Sigmoid colon (tissue), 7 donors: ENCODE measurements at regions of chr15 and their contacts with region 1.

Region 1: GRCh38 chr15:74799856-74800547 is 12.6 kb upstream of the LMAN1L start:
- DNase-seq: peak; percentile 80
- H3K4me3 ChIP-seq: no peak overlapping the region
- H3K27ac ChIP-seq: no peak overlapping the region
- H3K4me1 ChIP-seq: peaks cover 0 to 9% (median 5%) of the 10 kb centered on the region in 4 donors
- H3K27me3 ChIP-seq: no peaks in the 10 kb centered on the region
- CTCF ChIP-seq: peak; percentile 87 to 99 (median 93)
- EP300 ChIP-seq: no peak
- POLR2A ChIP-seq: no peak

Region 2: GRCh38 chr15:74680456-74680855 is 119.5 kb before region 1 on chr15:
- intact Hi-C with region 1: no loop called
- DNase-seq: no peak
- H3K4me3 ChIP-seq: no peak overlapping the region
- H3K27ac ChIP-seq: no peak overlapping the region
- H3K4me1 ChIP-seq: no peaks in the 10 kb centered on the region
- H3K27me3 ChIP-seq: no peaks in the 10 kb centered on the region
- CTCF ChIP-seq: no peak
- EP300 ChIP-seq: no peak
- POLR2A ChIP-seq: no peak

Region 3: DNA sequence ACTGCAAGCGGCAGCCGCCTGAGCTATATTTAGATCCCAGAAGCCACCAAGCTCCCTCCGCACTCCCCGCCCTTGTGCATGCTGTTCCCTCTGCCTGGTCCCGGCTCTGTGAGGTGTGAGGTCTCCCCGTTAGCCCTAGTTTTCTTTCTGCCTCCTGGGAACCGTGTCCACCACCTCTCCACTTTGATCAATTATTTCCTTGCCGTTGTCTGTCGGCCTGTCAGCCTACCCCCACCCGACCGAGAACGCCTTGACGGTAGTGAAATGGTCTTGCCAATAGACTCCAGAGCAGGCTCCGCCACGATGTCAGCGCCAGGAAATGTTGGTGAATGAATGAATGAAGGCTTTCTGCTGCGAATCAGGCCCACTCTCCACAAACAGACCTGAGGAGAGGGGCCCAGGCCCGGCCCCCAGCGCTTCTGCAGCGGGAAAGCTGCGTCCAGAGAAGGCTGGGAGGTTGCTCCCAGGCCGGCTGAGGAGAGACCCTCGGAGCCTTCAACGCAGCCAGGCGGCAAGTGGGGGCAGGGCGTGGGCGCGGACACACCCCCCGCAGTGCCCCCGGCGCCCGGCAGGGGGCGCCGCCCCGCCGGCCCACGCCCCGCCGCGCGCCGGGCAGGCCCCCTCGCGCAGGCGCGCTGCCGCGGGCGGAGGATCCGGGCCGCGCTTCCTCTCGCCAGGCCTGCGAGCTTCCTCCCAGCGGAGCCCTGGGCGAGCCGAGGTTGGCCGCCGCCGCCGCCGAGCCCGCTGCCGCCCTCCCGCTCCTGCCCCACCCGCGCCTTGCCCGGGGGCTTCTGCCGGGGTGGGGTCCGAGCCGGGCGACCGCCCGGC is 18.4 kb before region 1 on chr15 and contains the start of gene CSK:
- intact Hi-C with region 1: loop called (anchors 1 kb)
- DNase-seq: peak; percentile 86
- H3K4me3 ChIP-seq: peak within 1 kb of the TSS; percentile 48 to 92 (median 78)
- H3K27ac ChIP-seq: peak within 1 kb of the TSS; percentile 77 to 93 (median 82)
- H3K4me1 ChIP-seq: peaks cover 0 to 60% (median 46%) of the 10 kb centered on the region in 4 donors
- H3K27me3 ChIP-seq: no peaks in the 10 kb centered on the region
- CTCF ChIP-seq: peak in 3 of 4 experiments; percentile 14 to 54 (median 26)
- EP300 ChIP-seq: no peak
- POLR2A ChIP-seq: no peak
- total RNA-seq, gene CSK: 9.7 to 22.4 (median 14.2) TPM